Panc1 (cell line): ENCODE measurements at regions of chr9 and their contacts with region 1.

Region 1: DNA sequence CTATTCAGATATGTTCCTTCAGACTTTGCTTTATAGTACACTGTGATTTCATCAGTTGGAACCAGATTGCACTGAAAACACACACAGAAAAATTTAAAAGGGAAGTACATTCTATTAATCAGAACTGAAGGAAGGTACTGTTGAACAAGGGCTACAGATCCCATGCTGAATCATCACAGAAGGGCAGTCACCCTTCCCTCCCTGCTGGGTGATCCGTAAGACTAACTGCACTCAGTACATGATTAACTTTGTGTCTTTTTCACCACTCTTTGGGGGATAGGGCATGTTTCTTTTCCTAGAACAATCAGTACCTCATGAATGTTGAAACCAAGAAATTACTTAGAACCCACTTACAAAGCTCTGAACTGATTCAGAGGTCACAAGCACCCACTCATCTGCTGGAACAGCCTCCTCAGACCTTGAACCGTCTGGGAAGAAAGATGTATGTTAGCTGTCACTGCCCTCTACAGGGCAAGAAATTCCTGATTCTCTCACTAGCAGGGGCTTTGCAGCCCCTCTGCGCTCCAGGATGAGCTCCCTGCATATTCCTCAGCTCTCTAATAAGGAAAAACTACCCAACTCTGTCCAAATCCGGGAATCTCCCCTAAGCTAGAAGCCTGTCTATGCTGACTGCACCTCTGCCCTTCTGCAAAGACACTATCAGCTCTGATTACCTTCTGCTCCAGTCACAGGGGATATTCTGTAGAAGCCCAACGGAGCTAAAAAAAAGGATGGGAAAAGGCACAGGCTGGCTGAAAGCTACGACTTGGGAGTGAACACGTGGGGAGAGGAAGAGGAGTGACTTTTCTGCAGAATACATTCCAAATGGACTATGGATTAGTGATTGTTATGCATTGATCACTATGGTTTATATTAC is 51.0 kb downstream of the IARS1 start:
- DNase-seq: no peak
- ATAC-seq: no peak
- H3K4me3 ChIP-seq: no peak overlapping the region
- H3K27ac ChIP-seq: no peak overlapping the region
- H3K4me1 ChIP-seq: no peaks in the 10 kb centered on the region
- H3K27me3 ChIP-seq: no peaks in the 10 kb centered on the region
- CTCF ChIP-seq: peak; percentile 21

Region 2: GRCh38 chr9:92138157-92138959 is 104.1 kb before region 1 on chr9:
- CTCF ChIA-PET with region 1: interaction called, 4 read pairs
- POLR2A ChIA-PET with region 1: no interaction called
- in situ Hi-C with region 1: no loop called
- intact Hi-C with region 1: loop called (anchors 5 kb)
- DNase-seq: no peak
- ATAC-seq: 0 out of 2 replicates have a peak, but pooled peaks have one; percentile 62
- H3K4me3 ChIP-seq: no peak overlapping the region
- H3K27ac ChIP-seq: no peak overlapping the region
- H3K4me1 ChIP-seq: no peaks in the 10 kb centered on the region
- H3K27me3 ChIP-seq: no peaks in the 10 kb centered on the region
- CTCF ChIP-seq: peak; percentile 82

Region 3: DNA sequence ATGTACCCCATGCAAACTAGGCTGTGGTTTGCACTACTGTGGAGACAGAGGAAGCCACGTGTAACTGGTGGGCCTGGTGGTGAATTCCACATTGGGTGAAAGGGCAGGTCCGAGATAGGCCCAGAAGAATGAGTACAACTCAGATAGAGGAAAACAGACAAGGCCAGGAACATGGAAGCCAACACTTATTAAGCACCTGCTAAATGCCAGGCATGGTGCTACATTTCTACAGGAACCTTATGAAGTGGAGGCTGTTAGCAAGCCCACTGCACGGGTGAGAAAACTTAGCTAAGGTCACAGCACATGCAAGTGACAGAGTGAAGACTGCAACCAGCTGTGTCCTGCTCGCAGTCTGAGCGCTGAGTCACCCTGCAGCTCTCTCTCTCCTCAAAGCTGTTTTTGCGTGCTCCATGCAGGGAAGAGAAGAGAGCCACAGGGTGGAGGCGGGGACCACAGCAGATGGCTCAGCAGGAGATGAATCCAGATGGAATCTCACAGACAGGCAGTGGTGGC is 61.8 kb before region 1 on chr9:
- CTCF ChIA-PET with region 1: no interaction called
- POLR2A ChIA-PET with region 1: no interaction called
- in situ Hi-C with region 1: no loop called
- intact Hi-C with region 1: no loop called
- DNase-seq: no peak
- ATAC-seq: no peak
- H3K4me3 ChIP-seq: no peak overlapping the region
- H3K27ac ChIP-seq: no peak overlapping the region
- H3K4me1 ChIP-seq: no peaks in the 10 kb centered on the region
- H3K27me3 ChIP-seq: no peaks in the 10 kb centered on the region
- CTCF ChIP-seq: no peak

Region 4: GRCh38 chr9:92223758-92224157 is 18.7 kb before region 1 on chr9:
- CTCF ChIA-PET with region 1: no interaction called
- POLR2A ChIA-PET with region 1: no interaction called
- in situ Hi-C with region 1: no loop called
- intact Hi-C with region 1: no loop called
- DNase-seq: no peak
- ATAC-seq: no peak
- H3K4me3 ChIP-seq: no peak overlapping the region
- H3K27ac ChIP-seq: no peak overlapping the region
- H3K4me1 ChIP-seq: no peaks in the 10 kb centered on the region
- H3K27me3 ChIP-seq: no peaks in the 10 kb centered on the region
- CTCF ChIP-seq: no peak